ENCODE measurements at regions of chr1 and their contacts with region 1.

Region 1: GRCh38 chr1:109773146-109773899 is 9.6 kb upstream of the EPS8L3 start:
- DNase-seq: peak; percentile 78
- ATAC-seq: peak; percentile 86
- H3K4me3 ChIP-seq: no peak overlapping the region
- H3K27ac ChIP-seq: no peak overlapping the region
- H3K4me1 ChIP-seq: peaks cover 42% of the 10 kb centered on the region
- H3K27me3 ChIP-seq: peaks cover 2 to 19% of the 10 kb centered on the region in 2 experiments; a peak in 3 of 5 replicates
- CTCF ChIP-seq: peak; percentile 98
- EP300 ChIP-seq: no peak
- POLR2A ChIP-seq: no peak
- RAD21 ChIP-seq: peak; percentile 96

Region 2: DNA sequence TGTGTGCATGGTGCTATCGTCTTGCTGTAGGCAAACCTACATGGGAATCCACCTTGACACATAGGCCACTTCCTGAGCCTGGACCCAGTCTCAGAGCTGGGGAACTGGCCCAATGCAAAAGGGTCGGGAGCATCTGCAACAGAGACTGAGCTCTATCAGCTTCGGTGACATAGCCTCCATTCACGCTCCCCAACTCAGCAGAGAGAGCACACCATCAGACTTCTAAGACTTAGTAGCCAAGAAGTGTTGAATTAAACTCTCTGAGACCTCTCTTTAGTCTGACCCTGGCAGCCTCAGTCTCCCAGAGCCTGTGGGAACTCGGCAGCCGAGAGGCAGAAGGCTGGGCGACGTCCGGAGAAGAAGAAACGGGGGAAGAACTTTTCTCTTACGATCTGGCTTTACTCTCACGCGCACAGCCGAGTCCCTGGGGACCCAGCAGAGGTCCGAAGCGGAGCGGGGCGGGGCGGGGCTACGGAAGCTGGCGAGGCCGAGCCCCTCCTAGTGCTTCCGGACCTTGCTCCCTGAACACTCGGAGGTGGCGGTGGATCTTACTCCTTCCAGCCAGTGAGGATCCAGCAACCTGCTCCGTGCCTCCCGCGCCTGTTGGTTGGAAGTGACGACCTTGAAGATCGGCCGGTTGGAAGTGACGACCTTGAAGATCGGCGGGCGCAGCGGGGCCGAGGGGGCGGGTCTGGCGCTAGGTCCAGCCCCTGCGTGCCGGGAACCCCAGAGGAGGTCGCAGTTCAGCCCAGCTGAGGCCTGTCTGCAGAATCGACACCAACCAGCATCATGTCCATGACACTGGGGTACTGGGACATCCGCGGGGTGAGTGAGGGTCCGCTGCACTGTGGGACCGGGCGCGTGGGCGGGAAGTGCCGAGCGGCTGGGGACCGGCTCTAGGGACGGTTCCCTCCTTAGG is 117.5 kb before region 1 on chr1 and contains the start of gene GSTM4:
- CTCF ChIA-PET with region 1: no interaction called
- POLR2A ChIA-PET with region 1: no interaction called
- in situ Hi-C with region 1: no loop called
- intact Hi-C with region 1: loop called (anchors 5 kb)
- DNase-seq: peak; percentile 59
- ATAC-seq: peak; percentile 97
- H3K4me3 ChIP-seq: peak within 1 kb of the TSS; percentile 83 to 88 (median 86)
- H3K27ac ChIP-seq: peak within 1 kb of the TSS; percentile 59
- H3K4me1 ChIP-seq: peaks cover 35% of the 10 kb centered on the region
- H3K27me3 ChIP-seq: 0 out of 5 replicates have a peak, but pooled peaks cover 0 to 4% of the 10 kb centered on the region in 2 experiments
- CTCF ChIP-seq: peak; percentile 55; the same call in 1 of the 2 replicates
- EP300 ChIP-seq: no peak
- POLR2A ChIP-seq: peak in 1 of 2 experiments; percentile 85; a peak in 2 of 4 replicates
- RAD21 ChIP-seq: no peak
- total RNA-seq, gene GSTM4: 25.3 and 30.6 TPM in 2 replicates

Region 3: DNA sequence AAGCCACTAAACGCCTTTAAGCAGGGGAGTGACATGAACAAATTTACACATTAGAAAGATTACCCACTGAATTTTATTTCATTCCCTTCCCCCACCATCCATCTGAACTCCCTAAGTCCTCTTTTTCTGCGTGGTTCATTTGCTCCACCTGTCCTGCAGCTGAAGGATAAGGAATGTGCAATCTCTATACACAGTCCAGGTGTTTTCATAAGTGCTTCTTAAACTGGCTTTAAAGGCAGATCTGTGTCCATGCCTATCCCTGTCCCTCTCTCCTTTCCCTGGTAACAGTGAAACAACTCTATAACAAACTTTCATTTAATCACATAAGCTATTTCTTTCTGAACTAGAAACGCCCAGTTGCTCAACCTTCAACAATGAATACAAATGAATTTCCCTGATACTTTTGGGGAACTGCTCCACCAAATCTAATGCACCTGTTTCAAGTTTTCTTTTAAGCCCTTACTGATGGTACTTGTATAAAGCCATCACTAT is 40.9 kb before region 1 on chr1:
- CTCF ChIA-PET with region 1: no interaction called
- POLR2A ChIA-PET with region 1: no interaction called
- in situ Hi-C with region 1: no loop called
- intact Hi-C with region 1: loop called (anchors 5 kb)
- DNase-seq: no peak
- ATAC-seq: peak; percentile 47
- H3K4me3 ChIP-seq: peak overlapping the region in 1 of 3 experiments; percentile 45; a peak in 1 of 6 replicates
- H3K27ac ChIP-seq: peak overlapping the region; percentile 41
- H3K4me1 ChIP-seq: peaks cover 27% of the 10 kb centered on the region
- H3K27me3 ChIP-seq: no peaks in the 10 kb centered on the region
- CTCF ChIP-seq: no peak
- EP300 ChIP-seq: no peak
- POLR2A ChIP-seq: no peak
- RAD21 ChIP-seq: no peak

Region 4: DNA sequence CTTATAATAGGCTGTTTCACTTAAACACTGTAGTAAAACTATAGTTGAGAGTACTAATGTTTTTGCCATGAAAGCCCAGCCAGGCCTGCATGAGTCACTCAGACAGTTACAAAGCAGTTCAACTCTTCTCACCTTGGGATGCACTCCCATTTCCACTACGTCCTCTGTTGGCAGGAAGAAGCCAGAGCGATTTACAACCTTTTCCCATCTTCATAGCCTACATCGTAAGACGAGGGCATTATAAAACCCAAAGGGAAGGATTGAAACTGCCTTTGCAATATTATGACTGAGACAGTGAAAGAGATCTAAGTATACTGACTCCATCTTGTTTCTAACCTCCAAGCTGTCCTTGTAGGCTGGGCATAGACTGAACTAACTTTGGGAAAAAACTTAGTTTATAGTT is 65.5 kb after region 1 on chr1:
- CTCF ChIA-PET with region 1: no interaction called
- POLR2A ChIA-PET with region 1: no interaction called
- in situ Hi-C with region 1: no loop called
- intact Hi-C with region 1: no loop called
- DNase-seq: peak; percentile 22
- ATAC-seq: no peak; the same call in 1 of the 3 replicates
- H3K4me3 ChIP-seq: no peak overlapping the region
- H3K27ac ChIP-seq: no peak overlapping the region
- H3K4me1 ChIP-seq: no peaks in the 10 kb centered on the region
- H3K27me3 ChIP-seq: peaks cover 0 to 5% of the 10 kb centered on the region in 2 experiments; a peak in 1 of 5 replicates
- CTCF ChIP-seq: no peak
- EP300 ChIP-seq: no peak
- POLR2A ChIP-seq: no peak
- RAD21 ChIP-seq: no peak

Region 5: DNA sequence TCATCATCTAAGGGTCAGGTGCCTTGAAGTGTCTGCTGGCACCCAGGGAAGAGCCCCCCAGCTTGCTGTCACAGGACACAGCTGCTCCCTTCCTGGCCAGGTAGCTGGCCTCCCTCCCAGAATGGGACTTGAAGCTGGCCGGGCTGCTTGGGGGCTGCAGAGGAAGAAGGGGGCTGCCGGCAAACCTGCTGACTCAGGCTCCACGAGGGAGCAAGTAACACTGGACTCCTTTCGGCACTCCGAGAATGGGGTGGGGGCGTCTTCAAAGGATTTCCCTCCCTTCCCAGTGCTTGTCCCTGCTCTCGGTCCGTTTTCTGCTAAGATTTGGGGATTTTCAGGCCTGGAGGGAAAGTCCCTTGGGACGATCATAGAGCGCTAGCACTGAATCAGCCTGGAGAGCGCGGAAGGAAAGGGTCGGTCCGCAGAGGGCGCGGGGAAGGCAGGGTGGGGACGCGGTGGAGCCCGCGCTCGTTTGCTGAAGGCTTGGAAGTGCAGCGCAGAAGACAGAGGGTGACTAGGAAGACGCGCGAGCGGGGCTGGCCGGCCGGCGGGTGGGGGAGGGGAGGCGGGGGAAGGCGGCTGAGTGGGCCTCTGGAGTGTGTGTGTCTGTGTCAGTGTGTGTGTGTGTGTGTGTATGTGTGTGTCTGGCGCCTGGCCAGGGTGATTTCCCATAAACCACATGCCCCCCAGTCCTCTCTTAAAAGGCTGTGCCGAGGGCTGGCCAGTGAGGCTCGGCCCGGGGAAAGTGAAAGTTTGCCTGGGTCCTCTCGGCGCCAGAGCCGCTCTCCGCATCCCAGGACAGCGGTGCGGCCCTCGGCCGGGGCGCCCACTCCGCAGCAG is 137.0 kb after region 1 on chr1 and contains the start of gene CSF1:
- CTCF ChIA-PET with region 1: no interaction called
- POLR2A ChIA-PET with region 1: no interaction called
- in situ Hi-C with region 1: no loop called
- intact Hi-C with region 1: loop called (anchors 5 kb)
- DNase-seq: no peak
- ATAC-seq: peak; percentile 70
- H3K4me3 ChIP-seq: peak within 1 kb of the TSS; percentile 73 to 85 (median 81)
- H3K27ac ChIP-seq: no peak within 1 kb of the TSS
- H3K4me1 ChIP-seq: peaks cover 79% of the 10 kb centered on the region
- H3K27me3 ChIP-seq: peaks cover 3 to 45% of the 10 kb centered on the region in 2 experiments
- CTCF ChIP-seq: no peak
- EP300 ChIP-seq: no peak
- POLR2A ChIP-seq: peak in 1 of 2 experiments; percentile 43; a peak in 2 of 4 replicates
- RAD21 ChIP-seq: no peak
- total RNA-seq, gene CSF1: 1.9 and 4.6 TPM in 2 replicates

Region 6: GRCh38 chr1:109974191-109974590 is 200.9 kb after region 1 on chr1:
- CTCF ChIA-PET with region 1: no interaction called
- POLR2A ChIA-PET with region 1: no interaction called
- in situ Hi-C with region 1: no loop called
- intact Hi-C with region 1: no loop called
- DNase-seq: no peak
- ATAC-seq: no peak
- H3K4me3 ChIP-seq: no peak overlapping the region
- H3K27ac ChIP-seq: no peak overlapping the region
- H3K4me1 ChIP-seq: peaks cover 28% of the 10 kb centered on the region
- H3K27me3 ChIP-seq: no peaks in the 10 kb centered on the region
- CTCF ChIP-seq: no peak
- EP300 ChIP-seq: no peak
- POLR2A ChIP-seq: no peak
- RAD21 ChIP-seq: no peak